ENCODE measurements at regions of chr2 and their contacts with region 1.

Region 1: DNA sequence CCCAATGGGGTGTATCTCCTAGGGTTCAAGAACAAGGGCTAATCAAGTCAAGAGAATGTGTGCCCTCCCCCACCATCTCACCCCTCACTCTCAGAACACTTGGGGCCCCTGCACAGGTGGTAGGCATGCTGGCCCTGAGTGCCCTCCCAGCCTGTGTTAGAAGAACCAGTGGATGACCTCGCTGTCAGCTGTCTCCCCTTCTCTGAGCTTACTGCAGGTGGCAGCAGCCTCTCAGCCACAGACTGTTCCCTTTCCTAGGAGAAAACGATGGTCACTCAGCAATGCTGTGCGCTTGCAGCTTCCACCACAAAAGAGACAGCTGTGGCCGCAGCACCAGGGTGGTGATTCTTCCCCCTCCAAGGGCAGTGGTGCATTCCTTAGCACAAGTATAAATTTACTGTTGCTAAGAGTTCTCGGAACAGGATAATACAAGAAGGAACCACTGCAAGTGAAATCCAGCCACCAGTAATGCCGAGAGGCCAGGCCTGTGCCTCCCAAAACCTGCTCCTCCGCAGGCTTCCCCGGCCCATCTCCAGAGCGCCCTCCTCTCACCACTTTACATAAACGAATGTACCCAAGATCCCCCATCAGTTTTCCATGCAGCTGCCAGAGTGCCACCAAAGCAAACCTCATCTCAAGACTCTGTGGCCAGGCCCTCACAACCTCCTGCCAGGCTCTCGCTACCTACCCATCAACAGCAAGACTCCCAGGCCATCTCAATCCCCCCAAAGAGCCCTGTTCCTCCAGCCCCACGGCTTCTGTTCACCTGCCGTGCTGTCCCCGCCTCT is 935 bp upstream of the RAMP1 start:
- DNase-seq: peak; percentile 70 to 80
- ATAC-seq: peak; percentile 82 to 88 (median 86)
- H3K4me3 ChIP-seq: peak overlapping the region; percentile 83
- H3K27ac ChIP-seq: peak overlapping the region; percentile 93
- H3K4me1 ChIP-seq: peaks cover 22% of the 10 kb centered on the region
- H3K27me3 ChIP-seq: peaks cover 0 to 2% (median 0%) of the 10 kb centered on the region in 3 donors
- CTCF ChIP-seq: peak; percentile 81

Region 2: GRCh38 chr2:237558906-237559641 is 299.4 kb before region 1 on chr2:
- intact Hi-C with region 1: no loop called
- DNase-seq: peak; percentile 78 to 86
- ATAC-seq: peak; percentile 71 to 91 (median 88)
- H3K4me3 ChIP-seq: no peak overlapping the region
- H3K27ac ChIP-seq: no peak overlapping the region
- H3K4me1 ChIP-seq: peaks cover 12% of the 10 kb centered on the region
- H3K27me3 ChIP-seq: no peaks in the 10 kb centered on the region
- CTCF ChIP-seq: no peak

Region 3: GRCh38 chr2:237835372-237835771 is 23.1 kb before region 1 on chr2:
- intact Hi-C with region 1: no loop called
- DNase-seq: no peak
- ATAC-seq: no peak
- H3K4me3 ChIP-seq: no peak overlapping the region
- H3K27ac ChIP-seq: no peak overlapping the region
- H3K4me1 ChIP-seq: no peaks in the 10 kb centered on the region
- H3K27me3 ChIP-seq: no peaks in the 10 kb centered on the region
- CTCF ChIP-seq: no peak

Region 4: DNA sequence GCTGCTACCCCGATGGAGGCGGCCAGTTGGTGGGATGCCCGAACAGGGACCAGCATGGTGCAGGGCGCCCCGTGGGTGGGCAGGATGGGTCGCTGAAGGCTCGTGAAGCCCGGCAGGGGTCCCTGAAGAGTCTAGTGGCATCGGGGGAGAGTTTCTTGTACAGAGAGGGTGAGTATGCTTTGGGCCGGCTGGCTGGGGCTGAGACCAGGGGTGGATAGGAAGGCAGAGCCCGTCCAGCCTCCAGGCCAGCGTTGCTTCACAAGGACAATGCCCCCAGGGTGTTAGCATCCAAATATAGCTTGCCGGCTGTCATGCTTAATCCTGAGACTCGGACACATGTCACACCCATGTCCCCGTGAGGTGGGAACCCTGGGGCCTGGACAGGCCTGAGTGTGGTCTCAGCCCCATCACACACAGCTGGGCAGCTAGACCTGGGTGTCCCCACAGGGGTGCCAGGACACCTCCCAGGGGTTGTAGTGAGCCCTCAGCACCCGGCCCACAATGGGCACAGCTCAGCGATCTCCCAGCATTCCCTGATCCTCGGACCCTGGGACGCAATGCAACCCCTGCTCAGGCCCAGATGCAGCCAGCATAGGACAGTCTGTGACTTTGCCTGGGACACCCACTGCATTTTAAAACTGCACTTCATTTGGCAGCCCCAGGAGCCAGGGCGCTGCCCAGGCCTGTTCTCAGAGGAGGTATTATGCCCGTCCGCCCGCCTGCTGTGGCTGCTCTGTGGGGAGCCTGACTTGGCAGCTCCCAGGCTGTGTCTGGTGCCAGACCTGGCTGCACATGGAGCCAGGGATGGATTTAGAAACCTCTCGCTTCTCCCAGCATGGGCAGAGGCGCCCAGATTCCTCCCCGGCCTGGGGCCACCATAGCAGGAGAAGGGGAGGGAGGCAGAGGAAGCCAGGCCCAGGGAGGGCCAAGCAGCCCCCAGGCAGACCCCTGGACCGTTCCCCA is 37.3 kb after region 1 on chr2:
- intact Hi-C with region 1: loop called (anchors 5 kb)
- DNase-seq: peak; percentile 76 to 93
- ATAC-seq: peak; percentile 75 to 85 (median 82)
- H3K4me3 ChIP-seq: peak overlapping the region; percentile 41
- H3K27ac ChIP-seq: peak overlapping the region; percentile 98
- H3K4me1 ChIP-seq: peaks cover 63% of the 10 kb centered on the region
- H3K27me3 ChIP-seq: no peaks in the 10 kb centered on the region
- CTCF ChIP-seq: no peak

Region 5: GRCh38 chr2:237966565-237967462 is 108.3 kb after region 1 on chr2 and contains the start of gene UBE2F:
- intact Hi-C with region 1: loop called (anchors 2 to 5 kb)
- DNase-seq: peak; percentile 97 to 99
- ATAC-seq: peak; percentile 97 to 99 (median 98)
- H3K4me3 ChIP-seq: peak within 1 kb of the TSS; percentile 88
- H3K27ac ChIP-seq: peak within 1 kb of the TSS; percentile 78
- H3K4me1 ChIP-seq: peaks cover 25% of the 10 kb centered on the region
- H3K27me3 ChIP-seq: no peaks in the 10 kb centered on the region
- CTCF ChIP-seq: no peak
- total RNA-seq, gene UBE2F: 46.0 to 67.5 (median 52.5) TPM

Region 6: DNA sequence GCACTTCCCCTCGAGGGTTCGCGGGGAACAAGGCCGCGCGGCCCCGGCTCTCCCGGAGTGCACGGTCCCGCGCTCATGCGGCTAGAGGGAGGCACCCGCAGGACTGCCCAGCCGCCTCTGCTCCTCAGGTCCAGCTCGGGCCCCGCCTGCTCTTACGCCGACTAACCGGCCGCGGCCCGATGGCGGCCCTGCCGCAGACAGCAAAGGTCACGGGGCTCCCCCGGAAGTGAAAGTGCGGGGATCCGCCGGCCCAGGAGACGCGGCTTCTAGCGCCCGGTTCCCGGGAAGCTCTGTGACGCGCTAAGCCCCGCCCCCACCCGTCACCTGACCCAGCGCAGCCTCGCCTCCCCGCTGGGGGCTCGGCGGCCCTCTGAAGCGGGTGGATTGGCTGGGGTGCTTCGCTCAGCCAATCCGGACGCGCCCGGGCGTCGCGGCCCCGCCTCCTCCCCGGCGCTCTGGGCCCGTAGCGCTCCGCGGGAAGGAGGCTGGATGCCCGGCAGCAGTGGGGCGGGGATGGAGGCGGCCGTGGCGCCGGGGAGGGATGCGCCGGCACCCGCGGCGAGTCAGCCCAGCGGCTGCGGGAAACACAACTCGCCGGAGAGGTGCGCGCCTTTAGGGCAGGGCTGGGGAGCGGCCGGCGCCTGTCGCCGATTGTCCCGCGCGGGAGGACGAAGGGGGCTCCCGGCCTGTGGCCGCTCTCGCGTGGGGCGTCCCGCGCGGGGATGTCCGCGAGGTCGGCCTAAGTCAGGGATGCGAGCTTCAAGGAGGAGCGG is 202.2 kb after region 1 on chr2 and contains the start of gene SCLY:
- intact Hi-C with region 1: loop called in 1 of 2 experiments (anchors 5 kb)
- DNase-seq: peak; percentile 98 to 99
- ATAC-seq: peak; percentile 99
- H3K4me3 ChIP-seq: peak within 1 kb of the TSS; percentile 99
- H3K27ac ChIP-seq: peak within 1 kb of the TSS; percentile 95
- H3K4me1 ChIP-seq: peaks cover 13% of the 10 kb centered on the region
- H3K27me3 ChIP-seq: no peaks in the 10 kb centered on the region
- CTCF ChIP-seq: no peak
- total RNA-seq, gene SCLY: 4.8 to 10.1 (median 7.4) TPM

Region 7: GRCh38 chr2:238239872-238240751 is 381.6 kb after region 1 on chr2 and contains the start of gene HES6:
- intact Hi-C with region 1: no loop called
- DNase-seq: peak; percentile 92 to 94
- ATAC-seq: peak; percentile 80 to 85 (median 81)
- H3K4me3 ChIP-seq: peak within 1 kb of the TSS; percentile 69
- H3K27ac ChIP-seq: peak within 1 kb of the TSS; percentile 82
- H3K4me1 ChIP-seq: peaks cover 32% of the 10 kb centered on the region
- H3K27me3 ChIP-seq: peaks cover 0 to 2% (median 0%) of the 10 kb centered on the region in 3 donors
- CTCF ChIP-seq: no peak
- total RNA-seq, gene HES6: 4.1 to 13.1 (median 10.9) TPM

Region 8: GRCh38 chr2:238263204-238264071 is 404.9 kb after region 1 on chr2:
- intact Hi-C with region 1: loop called in 1 of 2 experiments (anchors 2 kb)
- DNase-seq: peak; percentile 91 to 95
- ATAC-seq: peak; percentile 82 to 95 (median 90)
- H3K4me3 ChIP-seq: no peak overlapping the region
- H3K27ac ChIP-seq: peak overlapping the region; percentile 48
- H3K4me1 ChIP-seq: peaks cover 19% of the 10 kb centered on the region
- H3K27me3 ChIP-seq: no peaks in the 10 kb centered on the region
- CTCF ChIP-seq: peak; percentile 86

Measured in psoas muscle (tissue), 8 donors.